ENCODE measurements at regions of chr9 and their contacts with region 1.

Region 1: GRCh38 chr9:99819856-99820684 is 1.6 kb upstream of the NR4A3 start:
- DNase-seq: peak; percentile 89 to 97 (median 94)
- ATAC-seq: peak; percentile 78
- H3K4me3 ChIP-seq: peak overlapping the region; percentile 85
- H3K4me3 Mint-ChIP-seq: peak overlapping the region; percentile 87 to 98 (median 96)
- H3K27ac ChIP-seq: peak overlapping the region; percentile 95
- H3K27ac Mint-ChIP-seq: peak overlapping the region; percentile 75 to 100 (median 99)
- H3K4me1 ChIP-seq: peaks cover 25 to 44% of the 10 kb centered on the region in 2 donors
- H3K4me1 Mint-ChIP-seq: peaks cover 24 to 54% (median 48%) of the 10 kb centered on the region in 7 donors
- H3K27me3 ChIP-seq: peaks cover 6 to 21% of the 10 kb centered on the region in 2 donors
- H3K27me3 Mint-ChIP-seq: peaks cover 19 to 67% (median 29%) of the 10 kb centered on the region in 5 donors

Region 2: GRCh38 chr9:97982683-97983588 is 1837.1 kb before region 1 on chr9 and contains the start of gene ANP32B:
- CTCF ChIA-PET with region 1: no interaction called
- POLR2A ChIA-PET with region 1: no interaction called
- intact Hi-C with region 1: loop called in 1 of 2 experiments (anchors 10 kb)
- DNase-seq: peak; percentile 94 to 97 (median 96)
- ATAC-seq: peak; percentile 90
- H3K4me3 ChIP-seq: peak within 1 kb of the TSS; percentile 85
- H3K4me3 Mint-ChIP-seq: peak within 1 kb of the TSS; percentile 79 to 92 (median 86)
- H3K27ac ChIP-seq: peak within 1 kb of the TSS; percentile 98
- H3K27ac Mint-ChIP-seq: peak within 1 kb of the TSS; percentile 25 to 94 (median 85)
- H3K4me1 ChIP-seq: peaks cover 30 to 51% of the 10 kb centered on the region in 2 donors
- H3K4me1 Mint-ChIP-seq: peaks cover 48 to 70% (median 63%) of the 10 kb centered on the region in 7 donors
- H3K27me3 ChIP-seq: no peaks in the 10 kb centered on the region
- H3K27me3 Mint-ChIP-seq: no peaks in the 10 kb centered on the region
- total RNA-seq, gene ANP32B: 143 to 267 (median 186) TPM

Region 3: DNA sequence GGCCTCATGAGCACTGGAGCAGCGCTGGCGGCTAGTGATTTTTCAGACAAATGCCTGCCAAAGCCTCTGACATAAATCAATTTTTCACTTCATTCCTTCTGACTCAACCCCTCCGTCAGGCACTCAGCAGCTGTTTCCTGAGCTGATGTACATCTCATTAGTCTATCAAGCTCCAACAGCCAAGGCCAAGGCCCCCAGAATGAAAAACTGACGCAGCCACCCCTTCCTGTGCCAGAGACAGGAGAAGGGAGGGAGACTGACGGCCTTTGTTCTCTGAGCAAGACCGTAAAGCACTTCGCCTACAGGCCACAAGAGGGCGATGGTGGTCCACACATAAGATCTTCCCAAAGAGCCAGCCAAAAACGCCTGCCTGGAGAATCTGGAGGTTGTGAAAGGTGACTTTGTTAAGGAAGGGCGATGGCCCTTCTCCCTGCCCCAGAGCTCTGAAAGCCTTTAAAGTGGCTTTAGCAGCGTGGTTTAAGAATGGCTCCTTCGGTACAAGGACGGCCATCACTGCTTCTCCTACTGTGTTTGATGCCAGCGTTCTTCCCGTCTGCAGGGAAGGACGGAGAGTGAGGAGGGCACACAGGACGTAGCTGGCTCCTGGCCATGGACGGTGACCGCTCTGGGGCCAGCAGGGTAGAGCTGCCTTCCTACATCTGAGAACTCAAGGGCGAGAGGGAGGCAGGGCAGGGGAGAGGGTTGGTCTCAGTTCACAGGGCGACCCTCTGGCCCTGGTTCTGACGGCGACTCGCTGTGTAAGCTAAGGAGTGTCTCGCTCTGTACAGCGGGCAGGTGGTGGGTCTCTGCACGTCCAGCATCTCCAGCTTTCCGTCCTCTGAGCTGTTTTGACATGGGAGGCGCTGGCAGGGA is 635.4 kb before region 1 on chr9:
- CTCF ChIA-PET with region 1: no interaction called
- POLR2A ChIA-PET with region 1: no interaction called
- intact Hi-C with region 1: loop called in 1 of 2 experiments (anchors 5 kb)
- DNase-seq: peak; percentile 50 to 75 (median 72)
- ATAC-seq: peak; percentile 91
- H3K4me3 ChIP-seq: no peak overlapping the region
- H3K4me3 Mint-ChIP-seq: peak overlapping the region in 7 of 10 donors; percentile 43 to 73 (median 50)
- H3K27ac ChIP-seq: no peak overlapping the region
- H3K27ac Mint-ChIP-seq: peak overlapping the region in 4 of 9 donors; percentile 40 to 69 (median 52)
- H3K4me1 ChIP-seq: peaks cover 0 to 3% of the 10 kb centered on the region in 2 donors
- H3K4me1 Mint-ChIP-seq: peaks cover 0 to 43% (median 19%) of the 10 kb centered on the region in 7 donors
- H3K27me3 ChIP-seq: peaks cover 0 to 3% of the 10 kb centered on the region in 2 donors
- H3K27me3 Mint-ChIP-seq: peaks cover 0 to 18% (median 7%) of the 10 kb centered on the region in 5 donors

Region 4: DNA sequence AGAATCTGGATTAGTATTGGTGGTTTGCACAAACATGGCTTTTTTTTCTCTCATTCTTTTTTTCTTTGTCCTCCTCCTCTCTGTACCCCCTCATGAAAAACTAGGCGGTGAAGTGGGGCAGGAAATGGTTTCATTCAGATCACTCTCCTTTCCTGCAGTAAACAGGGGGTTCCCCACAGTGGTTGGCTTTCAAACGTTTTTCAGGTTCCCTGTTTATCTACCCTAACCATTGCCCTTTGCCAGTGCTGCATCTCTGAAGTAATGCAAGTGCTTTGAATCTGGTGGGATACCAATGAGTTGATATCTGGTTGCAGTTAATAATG is 31.4 kb after region 1 on chr9:
- CTCF ChIA-PET with region 1: no interaction called
- POLR2A ChIA-PET with region 1: no interaction called
- intact Hi-C with region 1: loop called (anchors 2 kb)
- DNase-seq: peak in 4 of 9 donors; percentile 15 to 42 (median 22)
- ATAC-seq: peak; percentile 86
- H3K4me3 ChIP-seq: no peak overlapping the region
- H3K4me3 Mint-ChIP-seq: peak overlapping the region in 7 of 10 donors; percentile 14 to 71 (median 32)
- H3K27ac ChIP-seq: no peak overlapping the region
- H3K27ac Mint-ChIP-seq: peak overlapping the region in 4 of 9 donors; percentile 49 to 81 (median 72)
- H3K4me1 ChIP-seq: peaks cover 10 to 26% of the 10 kb centered on the region in 2 donors
- H3K4me1 Mint-ChIP-seq: peaks cover 16 to 53% (median 25%) of the 10 kb centered on the region in 7 donors
- H3K27me3 ChIP-seq: no peaks in the 10 kb centered on the region
- H3K27me3 Mint-ChIP-seq: no peaks in the 10 kb centered on the region

Region 5: DNA sequence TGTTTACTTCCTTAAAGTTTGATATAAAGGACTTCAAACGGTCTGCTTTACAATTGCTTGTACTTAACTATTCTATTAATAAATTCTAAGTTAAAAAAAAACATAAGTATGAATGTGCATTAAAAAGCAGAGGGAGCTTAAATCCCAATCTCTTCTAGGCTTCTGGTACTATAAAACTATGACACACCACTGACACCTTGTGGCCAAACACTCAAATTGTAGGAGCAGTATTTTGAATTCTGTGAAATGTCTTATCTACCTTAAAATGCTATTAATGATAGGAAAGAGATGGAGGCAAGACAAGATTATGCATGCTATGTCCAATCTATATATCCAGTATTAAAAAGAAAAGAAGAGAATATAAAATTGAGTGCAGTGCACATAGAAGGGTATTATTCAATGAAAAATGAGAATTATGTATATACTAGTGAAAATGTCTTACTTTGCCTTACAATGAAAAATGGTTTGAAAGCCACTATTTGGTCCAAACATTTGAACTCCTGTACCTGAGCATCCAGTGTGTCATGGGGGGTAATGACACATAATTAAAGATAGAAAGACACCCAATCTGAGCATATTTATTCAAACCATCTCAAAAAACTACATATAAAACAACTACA is 191.1 kb after region 1 on chr9:
- CTCF ChIA-PET with region 1: no interaction called
- POLR2A ChIA-PET with region 1: no interaction called
- intact Hi-C with region 1: loop called (anchors 1 to 5 kb)
- DNase-seq: peak in 7 of 9 donors; percentile 24 to 63 (median 42)
- ATAC-seq: peak; percentile 67
- H3K4me3 ChIP-seq: no peak overlapping the region
- H3K4me3 Mint-ChIP-seq: no peak overlapping the region
- H3K27ac ChIP-seq: no peak overlapping the region
- H3K27ac Mint-ChIP-seq: no peak overlapping the region
- H3K4me1 ChIP-seq: no peaks in the 10 kb centered on the region
- H3K4me1 Mint-ChIP-seq: peaks cover 0 to 5% (median 0%) of the 10 kb centered on the region in 7 donors
- H3K27me3 ChIP-seq: no peaks in the 10 kb centered on the region
- H3K27me3 Mint-ChIP-seq: no peaks in the 10 kb centered on the region

Region 6: DNA sequence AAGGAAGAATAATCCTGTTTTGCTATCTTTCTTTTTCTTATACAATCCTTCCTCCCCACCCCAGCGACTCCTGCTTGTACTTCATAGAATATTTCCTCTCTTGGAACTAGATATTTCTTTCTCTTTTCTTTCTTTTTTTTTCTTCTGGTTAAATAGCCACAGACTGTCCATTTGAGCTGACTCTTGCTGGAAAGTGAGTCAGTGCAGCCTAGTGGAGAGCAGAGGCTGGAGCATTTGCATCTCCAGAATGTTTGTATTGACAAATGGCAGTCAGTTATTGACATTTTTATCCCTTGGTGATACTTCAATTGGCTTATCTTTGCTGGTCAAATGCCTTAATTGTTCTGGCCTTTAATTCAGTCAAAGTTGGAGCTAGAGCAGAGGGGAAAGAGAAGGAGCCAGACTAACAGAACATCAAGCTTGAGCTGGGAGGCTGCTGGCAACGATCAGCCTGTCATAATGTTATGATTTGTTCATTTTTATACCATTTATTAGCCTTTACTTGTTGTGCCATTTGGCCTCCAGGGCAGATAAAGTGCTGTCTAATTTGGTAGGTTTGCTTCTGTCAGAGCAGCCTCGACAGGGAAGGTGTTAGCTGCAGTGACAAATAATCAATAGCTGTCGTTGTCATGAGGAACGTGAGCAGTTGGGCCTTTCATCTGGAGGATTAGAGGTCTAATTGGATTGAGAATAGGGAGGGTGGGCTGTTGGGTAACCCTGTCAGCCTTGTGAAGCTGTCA is 348.0 kb after region 1 on chr9:
- CTCF ChIA-PET with region 1: no interaction called
- POLR2A ChIA-PET with region 1: no interaction called
- intact Hi-C with region 1: no loop called
- DNase-seq: no peak
- ATAC-seq: no peak
- H3K4me3 ChIP-seq: no peak overlapping the region
- H3K4me3 Mint-ChIP-seq: no peak overlapping the region
- H3K27ac ChIP-seq: no peak overlapping the region
- H3K27ac Mint-ChIP-seq: no peak overlapping the region
- H3K4me1 ChIP-seq: no peaks in the 10 kb centered on the region
- H3K4me1 Mint-ChIP-seq: peaks cover 0 to 4% (median 0%) of the 10 kb centered on the region in 7 donors
- H3K27me3 ChIP-seq: no peaks in the 10 kb centered on the region
- H3K27me3 Mint-ChIP-seq: no peaks in the 10 kb centered on the region

Region 7: DNA sequence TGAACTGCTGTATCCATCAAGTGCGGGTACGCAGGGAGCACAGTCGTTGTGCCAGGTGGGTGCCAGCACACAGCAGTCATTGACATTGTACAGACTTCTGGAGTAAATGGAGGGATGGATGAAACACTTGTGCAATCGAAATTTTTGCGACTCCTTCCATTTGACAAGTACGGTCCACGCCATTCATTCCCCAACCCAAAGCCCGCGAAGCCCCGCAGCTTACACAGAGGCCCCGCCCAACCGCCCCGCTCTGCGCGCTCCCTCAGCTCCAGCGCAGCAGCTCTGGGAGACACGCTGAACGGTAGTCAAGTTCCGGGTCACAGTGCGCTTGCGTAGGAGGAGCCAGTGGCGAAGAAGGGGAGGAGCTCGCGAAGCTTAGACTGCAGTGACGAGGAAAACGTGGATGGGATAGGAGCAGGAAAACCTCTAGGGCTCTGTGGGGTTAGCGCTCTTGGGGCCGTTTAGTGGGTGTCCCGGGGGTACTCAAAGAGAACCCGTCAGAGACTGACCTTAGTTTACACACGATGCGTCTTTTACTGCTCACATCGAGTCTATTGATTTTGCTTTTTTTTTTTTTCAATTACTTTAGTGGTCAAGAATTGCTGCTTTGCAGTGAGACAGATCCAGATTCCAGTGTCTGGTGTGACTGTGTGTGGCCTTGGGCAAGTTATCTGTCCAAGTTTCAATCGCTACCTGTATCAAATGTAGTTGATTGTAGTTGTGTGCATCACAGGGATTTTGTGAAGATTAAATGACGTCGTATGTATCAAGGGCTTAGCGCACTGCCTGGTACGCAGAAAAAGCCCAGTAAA is 591.6 kb after region 1 on chr9:
- CTCF ChIA-PET with region 1: no interaction called
- POLR2A ChIA-PET with region 1: interaction called, 3 read pairs
- intact Hi-C with region 1: loop called in 1 of 2 experiments (anchors 1 kb)
- DNase-seq: peak; percentile 58 to 87 (median 80)
- ATAC-seq: peak; percentile 100
- H3K4me3 ChIP-seq: peak overlapping the region; percentile 91
- H3K4me3 Mint-ChIP-seq: peak overlapping the region; percentile 83 to 98 (median 89)
- H3K27ac ChIP-seq: peak overlapping the region; percentile 55
- H3K27ac Mint-ChIP-seq: peak overlapping the region; percentile 56 to 90 (median 84)
- H3K4me1 ChIP-seq: peaks cover 10 to 15% of the 10 kb centered on the region in 2 donors
- H3K4me1 Mint-ChIP-seq: peaks cover 10 to 16% (median 13%) of the 10 kb centered on the region in 7 donors
- H3K27me3 ChIP-seq: no peaks in the 10 kb centered on the region
- H3K27me3 Mint-ChIP-seq: peaks cover 6 to 21% (median 15%) of the 10 kb centered on the region in 5 donors

Measured in naive thymus-derived CD4-positive, alpha-beta T cell (primary cell).